ENCODE measurements at regions of chr11 and their contacts with region 1.

Region 1: DNA sequence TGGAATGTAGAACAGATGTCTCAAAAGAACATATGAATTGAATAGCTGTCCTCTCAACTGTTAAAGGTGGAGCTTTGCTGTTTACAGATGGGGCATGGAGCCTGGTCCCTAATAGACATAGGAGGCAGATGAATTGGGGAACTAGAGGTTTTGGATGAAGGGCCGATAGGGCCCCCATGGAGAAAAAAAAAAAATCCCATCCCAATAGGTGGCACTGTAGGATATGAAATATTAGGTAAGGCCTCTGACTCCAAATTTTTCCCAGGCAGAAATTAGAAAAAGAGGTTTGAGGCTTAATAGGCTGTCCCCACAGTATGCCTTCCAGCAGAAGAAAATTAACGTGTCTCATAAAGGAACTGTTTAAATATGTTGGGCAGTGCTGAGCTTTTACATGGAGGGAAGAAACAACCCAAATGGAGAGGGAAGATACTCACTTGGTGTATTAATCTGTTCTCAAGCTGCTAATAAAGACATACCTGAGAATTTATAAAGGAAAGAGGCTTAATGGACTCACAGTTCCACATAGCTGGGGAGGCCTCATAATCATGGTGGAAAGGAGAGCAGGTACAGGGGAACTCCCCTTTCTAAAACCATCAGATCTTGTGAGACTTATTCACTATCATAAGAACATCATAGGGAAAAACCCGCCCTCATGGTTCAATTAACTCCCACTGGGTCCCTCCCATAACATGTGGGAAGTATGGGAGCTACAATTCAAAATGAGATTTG is 30.1 kb upstream of the TMEM45B start:
- DNase-seq: peak; percentile 55
- H3K4me3 Mint-ChIP-seq: no peak overlapping the region
- H3K27ac Mint-ChIP-seq: no peak overlapping the region
- H3K4me1 Mint-ChIP-seq: peaks cover 8% of the 10 kb centered on the region
- H3K27me3 Mint-ChIP-seq: no peaks in the 10 kb centered on the region
- CTCF ChIP-seq: peak; percentile 62

Region 2: DNA sequence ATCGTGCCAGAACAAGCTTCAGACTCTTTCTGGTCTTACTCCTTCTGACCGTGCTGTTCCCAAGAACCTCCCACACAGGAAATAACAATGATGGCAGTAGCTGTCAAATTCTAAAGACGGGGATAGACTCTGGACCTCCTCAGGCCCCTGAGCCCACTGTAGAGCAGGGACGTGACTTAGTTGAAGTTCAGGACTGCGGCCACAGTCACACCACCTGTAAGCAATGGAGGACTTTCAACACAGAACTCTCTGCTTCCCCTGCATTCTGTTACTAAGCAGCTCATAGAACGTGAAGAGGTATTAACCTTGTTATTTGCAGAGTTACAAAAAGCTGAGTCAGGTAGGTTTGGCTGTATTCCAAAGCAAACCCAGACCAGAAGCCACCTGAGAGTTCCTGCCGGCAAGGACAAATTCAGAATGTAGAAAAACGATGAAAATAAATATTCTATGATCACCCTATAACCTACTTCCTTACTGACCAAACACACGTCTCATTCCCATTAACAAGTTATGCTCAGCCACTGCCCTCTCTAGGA is 42.8 kb after region 1 on chr11:
- CTCF ChIA-PET with region 1: interaction called, 5 read pairs
- POLR2A ChIA-PET with region 1: interaction called, 7 read pairs
- intact Hi-C with region 1: loop called (anchors 5 kb)
- DNase-seq: peak; percentile 81
- H3K4me3 Mint-ChIP-seq: peak overlapping the region; percentile 41
- H3K27ac Mint-ChIP-seq: peak overlapping the region; percentile 93
- H3K4me1 Mint-ChIP-seq: peaks cover 9% of the 10 kb centered on the region
- H3K27me3 Mint-ChIP-seq: no peaks in the 10 kb centered on the region
- CTCF ChIP-seq: no peak

Region 3: DNA sequence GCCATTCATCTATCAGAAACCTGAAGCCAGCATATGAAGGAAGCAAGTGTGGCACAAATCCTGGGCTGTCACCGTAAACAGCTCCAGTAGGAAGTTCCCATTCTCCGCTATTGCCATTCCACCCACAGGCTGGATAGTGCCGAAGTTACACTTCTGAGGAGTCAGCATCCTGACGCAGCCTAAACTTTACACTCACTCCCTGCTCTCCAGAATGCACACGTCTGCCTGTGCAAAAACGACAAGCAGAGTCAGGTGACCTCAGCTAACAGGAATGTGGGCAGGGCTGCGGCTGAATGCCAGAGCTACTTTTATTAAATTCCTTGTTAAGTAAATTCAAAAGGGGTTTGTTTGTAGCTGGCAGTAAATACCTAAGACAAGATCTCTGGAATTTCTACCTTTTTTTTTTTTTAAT is 76.2 kb after region 1 on chr11:
- CTCF ChIA-PET with region 1: interaction called, 42 read pairs
- POLR2A ChIA-PET with region 1: interaction called, 35 read pairs
- intact Hi-C with region 1: loop called (anchors 5 kb)
- DNase-seq: peak; percentile 89
- H3K4me3 Mint-ChIP-seq: peak overlapping the region; percentile 62
- H3K27ac Mint-ChIP-seq: peak overlapping the region; percentile 86
- H3K4me1 Mint-ChIP-seq: peaks cover 13% of the 10 kb centered on the region
- H3K27me3 Mint-ChIP-seq: no peaks in the 10 kb centered on the region
- CTCF ChIP-seq: no peak

Region 4: GRCh38 chr11:129922674-129923073 is 137.1 kb after region 1 on chr11:
- CTCF ChIA-PET with region 1: interaction called, 14 read pairs
- POLR2A ChIA-PET with region 1: no interaction called
- intact Hi-C with region 1: loop called (anchors 1 kb)
- DNase-seq: no peak
- H3K4me3 Mint-ChIP-seq: no peak overlapping the region
- H3K27ac Mint-ChIP-seq: no peak overlapping the region
- H3K4me1 Mint-ChIP-seq: peaks cover 5% of the 10 kb centered on the region
- H3K27me3 Mint-ChIP-seq: no peaks in the 10 kb centered on the region
- CTCF ChIP-seq: no peak

Region 5: DNA sequence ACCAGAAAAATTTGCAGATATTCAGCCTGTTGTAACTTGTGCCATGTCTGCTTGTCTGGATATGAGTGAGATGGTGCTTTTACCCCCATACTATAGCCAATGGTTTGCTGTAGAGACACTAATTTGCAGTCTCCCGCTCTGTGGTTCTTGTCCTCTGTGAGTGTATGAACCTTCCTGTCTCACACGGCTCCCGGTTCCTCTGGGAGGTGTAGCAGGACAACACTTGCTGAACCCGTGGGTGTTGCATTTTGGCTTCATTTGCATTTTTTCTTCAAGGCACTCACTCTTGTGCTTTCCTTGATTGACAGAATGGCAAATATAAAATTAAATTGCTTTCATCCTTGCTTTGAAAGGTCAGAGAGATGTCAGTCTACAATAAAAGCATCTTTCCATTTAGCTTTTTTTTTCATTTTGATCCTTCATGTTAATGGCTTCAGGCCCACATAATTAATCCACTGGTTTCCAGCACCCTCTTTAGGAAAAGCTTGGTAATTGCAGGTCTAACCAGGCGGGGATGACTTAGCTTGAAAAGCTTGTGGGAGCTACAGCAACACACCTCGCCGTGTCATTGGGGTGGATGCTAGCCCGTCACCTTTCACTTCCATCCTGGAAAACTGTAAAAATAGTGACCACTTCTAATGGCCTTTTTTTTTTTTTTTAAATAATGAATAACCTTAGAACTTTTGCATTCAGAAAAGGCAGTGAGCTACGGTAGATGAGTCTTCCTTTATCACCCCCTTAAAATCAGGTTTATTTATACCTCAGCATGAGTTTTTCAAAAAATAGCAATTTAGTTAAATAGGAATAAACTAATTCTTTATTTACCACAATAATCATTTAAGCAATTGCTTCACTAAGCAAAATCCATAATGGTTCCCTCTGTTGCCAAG is 346.7 kb after region 1 on chr11:
- CTCF ChIA-PET with region 1: interaction called, 20 read pairs
- POLR2A ChIA-PET with region 1: no interaction called
- intact Hi-C with region 1: loop called (anchors 1 kb)
- DNase-seq: peak; percentile 78
- H3K4me3 Mint-ChIP-seq: no peak overlapping the region
- H3K27ac Mint-ChIP-seq: no peak overlapping the region
- H3K4me1 Mint-ChIP-seq: no peaks in the 10 kb centered on the region
- H3K27me3 Mint-ChIP-seq: no peaks in the 10 kb centered on the region
- CTCF ChIP-seq: peak; percentile 88

Measured in MCF 10A (cell line).